AG04449 (cell line): ENCODE measurements at regions of chrX and their contacts with region 1.

Region 1: GRCh38 chrX:5113128-5113527 is 1115.5 kb downstream of the NLGN4X start:
- DNase-seq: no peak
- H3K4me3 ChIP-seq: no peak overlapping the region
- CTCF ChIP-seq: no peak

Region 2: DNA sequence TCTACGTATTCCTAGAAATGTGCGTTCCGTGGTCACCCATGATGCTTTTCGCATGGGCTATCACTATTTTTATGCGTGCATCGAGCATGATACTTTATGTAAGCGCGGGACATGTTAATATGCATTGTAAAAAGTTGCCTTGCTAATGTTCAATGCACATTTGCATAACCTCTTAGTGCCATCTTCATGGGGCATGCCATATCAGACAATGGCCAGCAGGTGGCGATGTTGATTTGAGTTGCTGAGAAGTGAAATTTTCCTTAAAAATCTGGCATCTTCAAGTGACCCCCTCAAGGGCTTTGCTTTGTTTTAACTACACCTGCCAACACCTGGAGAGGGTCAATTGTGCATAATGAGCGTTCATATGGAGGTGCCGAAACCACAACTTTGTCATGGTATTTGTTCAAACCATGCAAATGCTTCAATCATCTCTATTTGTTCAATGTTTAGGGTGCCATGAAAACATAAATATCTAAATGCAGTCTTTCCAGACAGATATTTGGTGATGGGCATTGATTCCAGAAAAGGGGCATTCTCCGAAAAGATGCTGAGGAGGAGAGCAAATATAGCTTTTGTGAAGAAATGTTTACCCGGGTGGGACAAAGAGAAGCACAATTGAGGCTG is 565.8 kb before region 1 on chrX:
- CTCF ChIA-PET with region 1: interaction called, 11 read pairs
- POLR2A ChIA-PET with region 1: no interaction called
- DNase-seq: no peak
- H3K4me3 ChIP-seq: no peak overlapping the region
- CTCF ChIP-seq: peak; percentile 57